ENCODE measurements at regions of chr13 and their contacts with region 1.

Region 1: GRCh38 chr13:73335221-73335620 is 276.4 kb downstream of the KLF5 start:
- DNase-seq: peak; percentile 89
- H3K4me3 Mint-ChIP-seq: peak overlapping the region; percentile 44
- H3K27ac Mint-ChIP-seq: peak overlapping the region; percentile 97
- H3K4me1 Mint-ChIP-seq: peaks cover 41% of the 10 kb centered on the region
- H3K27me3 Mint-ChIP-seq: no peaks in the 10 kb centered on the region
- CTCF ChIP-seq: no peak

Region 2: DNA sequence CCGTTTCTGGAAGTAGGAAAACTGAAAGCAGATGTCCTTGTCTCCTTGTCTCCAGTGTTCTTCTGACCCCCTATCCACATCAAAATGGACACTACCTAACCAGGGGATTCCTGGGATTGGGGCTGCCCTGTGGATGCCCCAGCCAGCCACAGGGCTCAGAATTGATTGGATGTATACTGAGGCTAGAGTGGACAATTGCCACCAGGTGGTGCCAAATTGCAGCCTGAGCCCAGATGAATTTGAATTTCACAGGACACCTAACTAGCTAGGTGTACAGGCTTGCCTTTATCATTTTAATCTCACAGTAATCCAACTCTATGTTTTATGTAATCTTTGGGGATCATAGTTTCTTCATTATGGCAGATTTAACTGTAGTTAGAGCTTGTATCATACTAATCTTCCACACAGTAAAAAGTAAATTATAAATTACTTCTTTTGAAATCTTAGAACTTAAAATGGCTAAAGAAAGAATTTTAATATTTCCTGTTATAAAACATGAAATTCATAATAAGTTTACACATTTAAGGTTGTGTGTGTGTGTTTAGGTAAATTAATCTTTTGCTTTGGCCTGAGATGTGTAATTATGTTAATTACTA is 495.3 kb before region 1 on chr13:
- CTCF ChIA-PET with region 1: no interaction called
- POLR2A ChIA-PET with region 1: no interaction called
- intact Hi-C with region 1: loop called (anchors 10 kb)
- DNase-seq: peak; percentile 80
- H3K4me3 Mint-ChIP-seq: no peak overlapping the region
- H3K27ac Mint-ChIP-seq: no peak overlapping the region
- H3K4me1 Mint-ChIP-seq: peaks cover 5% of the 10 kb centered on the region
- H3K27me3 Mint-ChIP-seq: no peaks in the 10 kb centered on the region
- CTCF ChIP-seq: peak; percentile 84

Region 3: DNA sequence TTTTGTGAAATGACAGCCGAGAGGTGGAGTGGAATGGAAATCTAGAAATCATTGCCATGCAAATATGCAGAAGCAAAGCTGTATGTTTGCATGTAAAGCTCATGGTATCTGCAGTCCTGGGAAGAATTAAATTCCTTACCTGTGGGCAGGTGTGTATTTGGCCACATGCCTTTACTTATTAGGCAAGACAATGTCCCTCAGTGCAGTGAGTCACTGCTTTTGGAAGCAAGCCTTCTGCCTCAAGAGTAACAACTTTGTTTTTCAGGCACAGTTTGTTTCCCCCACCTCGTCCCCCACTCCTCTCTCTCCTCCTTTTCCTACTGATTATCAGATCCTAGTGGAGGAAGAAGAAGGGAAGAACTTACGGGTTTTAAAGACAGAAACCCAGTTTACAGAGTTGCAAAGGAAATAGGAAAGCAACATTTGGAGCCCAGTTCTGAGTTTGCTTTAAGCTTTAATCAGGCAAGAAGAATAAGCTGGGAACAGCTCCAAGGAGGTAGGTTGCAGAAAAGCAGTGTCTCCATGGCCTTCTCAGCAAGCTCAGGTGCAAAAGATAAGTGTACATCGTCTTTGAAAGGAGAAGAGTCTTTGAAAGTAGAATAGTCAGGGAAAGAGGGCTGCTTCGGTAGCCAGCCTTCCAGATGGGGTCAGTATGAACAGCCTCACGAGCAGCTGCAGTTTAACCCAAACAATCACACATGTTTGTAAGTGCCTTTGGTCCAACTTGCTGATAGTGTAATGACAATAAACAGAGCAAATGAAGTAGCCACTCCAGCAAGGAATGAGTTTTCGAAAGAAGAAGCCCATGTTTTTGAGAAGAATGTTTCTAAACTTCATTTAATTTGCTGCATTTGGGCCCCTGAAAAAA is 86.3 kb before region 1 on chr13:
- CTCF ChIA-PET with region 1: interaction called, 3 read pairs
- POLR2A ChIA-PET with region 1: interaction called, 27 read pairs
- intact Hi-C with region 1: no loop called
- DNase-seq: peak; percentile 92
- H3K4me3 Mint-ChIP-seq: peak overlapping the region; percentile 34
- H3K27ac Mint-ChIP-seq: peak overlapping the region; percentile 85
- H3K4me1 Mint-ChIP-seq: peaks cover 28% of the 10 kb centered on the region
- H3K27me3 Mint-ChIP-seq: no peaks in the 10 kb centered on the region
- CTCF ChIP-seq: no peak

Region 4: GRCh38 chr13:73355134-73355533 is 19.9 kb after region 1 on chr13:
- CTCF ChIA-PET with region 1: no interaction called
- POLR2A ChIA-PET with region 1: interaction called, 11 read pairs
- intact Hi-C with region 1: no loop called
- DNase-seq: no peak
- H3K4me3 Mint-ChIP-seq: no peak overlapping the region
- H3K27ac Mint-ChIP-seq: no peak overlapping the region
- H3K4me1 Mint-ChIP-seq: peaks cover 13% of the 10 kb centered on the region
- H3K27me3 Mint-ChIP-seq: no peaks in the 10 kb centered on the region
- CTCF ChIP-seq: no peak

Region 5: GRCh38 chr13:73465617-73465971 is 130.4 kb after region 1 on chr13:
- CTCF ChIA-PET with region 1: interaction called, 3 read pairs
- POLR2A ChIA-PET with region 1: interaction called, 4 read pairs
- intact Hi-C with region 1: loop called (anchors 1 kb)
- DNase-seq: peak; percentile 76
- H3K4me3 Mint-ChIP-seq: no peak overlapping the region
- H3K27ac Mint-ChIP-seq: peak overlapping the region; percentile 90
- H3K4me1 Mint-ChIP-seq: peaks cover 15% of the 10 kb centered on the region
- H3K27me3 Mint-ChIP-seq: no peaks in the 10 kb centered on the region
- CTCF ChIP-seq: no peak

Region 6: GRCh38 chr13:73702419-73703071 is 367.3 kb after region 1 on chr13:
- CTCF ChIA-PET with region 1: no interaction called
- POLR2A ChIA-PET with region 1: interaction called, 10 read pairs
- intact Hi-C with region 1: loop called (anchors 2 kb)
- DNase-seq: peak; percentile 84
- H3K4me3 Mint-ChIP-seq: peak overlapping the region; percentile 63
- H3K27ac Mint-ChIP-seq: peak overlapping the region; percentile 94
- H3K4me1 Mint-ChIP-seq: peaks cover 33% of the 10 kb centered on the region
- H3K27me3 Mint-ChIP-seq: no peaks in the 10 kb centered on the region
- CTCF ChIP-seq: no peak

Measured in MCF 10A (cell line).